Posterior cingulate gyrus (tissue), 11 donors: ENCODE measurements at regions of chr17 and their contacts with region 1.

Region 1: GRCh38 chr17:79796763-79797491 is at the start of gene CBX8:
- DNase-seq: peak; percentile 98 to 100 (median 100)

Region 2: DNA sequence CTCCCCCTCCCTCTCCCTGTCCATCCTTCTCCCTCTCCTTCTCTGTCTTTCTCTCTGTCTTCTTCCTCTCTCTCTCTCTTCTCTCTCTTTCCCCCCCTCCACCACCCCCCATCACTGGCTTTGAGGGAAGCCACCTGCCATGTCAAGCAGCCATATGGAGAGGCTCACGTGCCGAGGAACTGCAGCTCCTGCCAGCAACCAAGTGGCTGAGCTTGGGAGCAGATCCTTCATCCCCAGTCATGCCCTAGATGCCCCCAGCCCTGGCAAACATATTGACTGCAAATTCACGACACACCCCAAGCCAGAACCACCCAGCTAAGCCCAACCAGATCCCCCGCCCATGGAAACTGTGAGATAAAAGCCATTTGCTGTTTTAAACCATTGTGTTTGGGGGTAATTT is 145.2 kb before region 1 on chr17:
- intact Hi-C with region 1: no loop called
- DNase-seq: peak in 1 of 10 donors; percentile 41

Region 3: GRCh38 chr17:79684132-79684985 is 112.6 kb before region 1 on chr17:
- intact Hi-C with region 1: no loop called
- DNase-seq: peak in 3 of 10 donors; percentile 63 to 78 (median 77)

Region 4: DNA sequence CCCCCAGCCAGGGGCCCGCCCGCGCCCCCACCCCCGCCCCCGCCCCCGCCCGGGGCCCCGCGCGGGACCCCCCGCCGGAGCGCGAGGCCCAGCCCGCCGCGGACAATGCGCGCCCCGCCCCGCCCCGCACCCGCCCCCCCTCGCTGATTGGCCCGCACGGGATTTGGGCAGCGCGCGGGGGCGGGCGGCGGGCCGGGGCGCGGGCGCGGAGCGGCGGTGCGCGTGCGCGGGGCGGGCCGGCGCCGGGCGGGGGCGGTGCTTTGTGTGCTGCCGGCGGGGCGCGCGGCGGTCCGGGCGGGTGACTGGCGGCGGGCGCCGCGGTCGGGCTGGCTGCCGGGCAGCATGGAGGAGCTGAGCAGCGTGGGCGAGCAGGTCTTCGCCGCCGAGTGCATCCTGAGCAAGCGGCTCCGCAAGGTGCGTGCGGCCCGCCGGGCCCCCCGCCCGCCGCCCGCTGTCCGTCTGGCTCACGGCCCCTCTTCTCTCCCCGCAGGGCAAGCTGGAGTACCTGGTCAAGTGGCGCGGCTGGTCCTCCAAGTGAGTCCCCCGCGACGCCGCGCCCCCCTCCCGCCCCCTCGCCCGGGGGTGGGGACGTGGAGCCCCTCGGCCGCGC is 18.9 kb before region 1 on chr17 and contains the start of gene CBX2:
- intact Hi-C with region 1: loop called (anchors 2 kb)
- DNase-seq: peak; percentile 50 to 96 (median 69)

Region 5: DNA sequence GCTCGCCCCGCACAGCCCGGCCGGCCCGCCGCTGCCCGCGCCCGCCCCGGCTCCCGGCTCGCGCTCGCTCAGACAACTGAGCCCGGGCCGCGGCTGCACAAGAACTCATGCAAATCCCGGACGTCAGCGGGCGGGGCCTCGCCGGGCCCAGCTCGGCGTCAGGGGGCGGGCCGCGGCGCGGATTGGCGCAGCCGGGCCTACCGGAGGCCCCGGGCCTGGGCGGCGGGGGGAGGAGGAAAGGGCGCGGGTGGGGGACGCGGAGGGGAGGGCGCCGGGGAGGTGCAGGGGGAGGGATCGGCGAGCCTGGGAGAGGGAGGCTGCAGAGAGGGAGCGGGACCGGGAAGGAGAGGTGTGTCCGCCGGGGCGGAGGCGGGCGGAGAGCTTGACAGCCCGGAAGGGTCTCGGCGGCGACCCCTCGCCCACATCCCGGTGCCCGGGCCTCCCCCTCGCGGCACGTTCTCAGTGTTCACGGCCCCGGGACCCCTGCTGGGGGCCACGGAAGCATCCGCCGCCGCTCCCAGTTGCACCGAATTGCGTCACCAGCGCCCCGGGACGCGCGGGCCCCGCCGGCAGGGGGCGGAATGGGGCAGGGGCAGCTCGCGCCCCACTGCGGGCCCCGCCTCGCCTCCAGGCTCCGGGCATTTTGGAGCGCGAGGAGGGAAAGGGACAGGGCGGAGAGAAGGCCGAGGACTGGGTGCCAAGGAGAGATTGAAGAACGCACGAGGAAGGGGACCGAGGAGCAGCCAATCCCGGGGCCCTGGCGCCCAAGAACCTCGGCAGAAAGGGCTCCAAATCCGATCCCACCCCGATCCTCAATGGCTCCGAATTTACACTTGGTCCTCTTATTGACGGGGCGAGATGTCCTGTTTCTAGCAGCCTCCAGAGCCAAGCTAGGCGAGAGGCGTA is 42.7 kb after region 1 on chr17 and contains the start of gene CBX4:
- intact Hi-C with region 1: loop called (anchors 1 kb)
- DNase-seq: peak; percentile 88 to 99 (median 96)

Region 6: GRCh38 chr17:79852748-79853147 is 55.8 kb after region 1 on chr17:
- intact Hi-C with region 1: no loop called
- DNase-seq: no peak

Region 7: DNA sequence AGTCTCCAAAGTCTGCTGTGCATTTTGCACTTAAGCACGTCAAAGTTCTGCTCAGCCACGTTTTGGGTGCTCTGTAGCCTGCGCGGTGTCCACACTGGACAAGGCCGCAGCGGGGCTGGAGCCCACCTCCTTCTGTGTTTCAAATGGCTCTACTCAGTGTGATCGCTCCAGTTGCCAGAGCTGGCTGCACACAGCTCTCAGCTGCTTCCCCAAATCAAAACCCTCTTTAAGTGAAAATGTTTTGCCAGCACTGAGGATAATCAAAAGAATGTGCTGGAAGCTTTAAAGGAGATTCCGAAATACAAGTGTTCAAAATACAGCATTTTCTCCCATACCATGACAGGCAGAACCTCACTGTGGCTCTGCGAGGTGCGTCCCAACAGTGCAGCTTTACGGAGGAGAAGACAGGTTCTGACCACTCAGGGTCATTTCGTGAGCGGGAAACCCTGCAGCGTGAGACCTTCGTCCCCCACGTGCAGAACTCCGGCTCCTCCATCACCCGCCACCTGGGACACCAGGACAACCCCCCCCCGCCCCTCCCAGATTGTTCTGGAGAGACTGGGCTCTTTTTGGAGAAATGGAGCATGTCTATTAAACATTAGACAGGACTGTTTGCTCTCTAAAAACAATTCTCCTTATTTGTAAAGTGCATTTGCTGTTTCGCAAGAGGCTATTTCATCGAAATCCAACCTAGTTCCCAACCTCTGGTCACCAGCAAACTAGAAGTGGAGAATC is 222.2 kb after region 1 on chr17:
- intact Hi-C with region 1: no loop called
- DNase-seq: peak in 1 of 10 donors; percentile 49